Ascending aorta (tissue), 2 donors: ENCODE measurements at regions of chr19 and their contacts with region 1.

Region 1: DNA sequence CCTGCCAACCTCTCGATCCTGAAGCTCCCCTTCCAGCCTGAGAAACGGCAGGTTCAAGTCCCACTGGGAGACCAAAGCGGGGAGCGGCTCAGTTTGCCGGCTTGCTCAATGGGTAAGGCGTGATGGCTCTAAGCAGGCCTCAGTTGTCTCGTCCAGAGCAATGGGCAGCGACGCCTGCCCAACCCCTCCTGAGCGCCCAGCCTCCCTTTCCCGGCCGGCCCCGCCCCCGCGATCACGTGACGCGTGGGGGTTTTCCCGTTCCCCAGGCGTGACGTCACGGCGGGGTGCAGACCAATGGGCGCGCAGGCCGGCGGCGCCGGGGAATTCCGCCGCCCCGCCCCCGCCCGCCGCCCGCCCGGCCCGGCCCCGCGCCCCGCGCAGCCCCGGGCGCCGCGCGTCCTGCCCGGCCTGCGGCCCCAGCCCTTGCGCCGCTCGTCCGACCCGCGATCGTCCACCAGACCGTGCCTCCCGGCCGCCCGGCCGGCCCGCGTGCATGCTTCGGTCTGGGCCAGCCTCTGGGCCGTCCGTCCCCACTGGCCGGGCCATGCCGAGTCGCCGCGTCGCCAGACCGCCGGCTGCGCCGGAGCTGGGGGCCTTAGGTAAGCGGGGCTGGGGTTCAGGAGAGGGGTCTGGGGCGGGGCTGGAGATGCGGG is at the start of gene RELB:
- DNase-seq: peak; percentile 73 to 97
- H3K4me3 ChIP-seq: peak within 1 kb of the TSS; percentile 82 to 100
- H3K27ac ChIP-seq: peak within 1 kb of the TSS; percentile 99 to 100
- H3K4me1 ChIP-seq: peaks cover 0 to 5% of the 10 kb centered on the region in 2 donors
- H3K27me3 ChIP-seq: no peaks in the 10 kb centered on the region
- CTCF ChIP-seq: no peak
- total RNA-seq, gene RELB: 8.7 TPM

Region 2: GRCh38 chr19:44912854-44913253 is 88.4 kb before region 1 on chr19:
- intact Hi-C with region 1: loop called (anchors 5 kb)
- DNase-seq: peak in 1 of 2 donors; percentile 26
- H3K4me3 ChIP-seq: no peak overlapping the region
- H3K27ac ChIP-seq: no peak overlapping the region
- H3K4me1 ChIP-seq: no peaks in the 10 kb centered on the region
- H3K27me3 ChIP-seq: no peaks in the 10 kb centered on the region
- CTCF ChIP-seq: no peak

Region 3: GRCh38 chr19:44972802-44973201 is 28.4 kb before region 1 on chr19:
- intact Hi-C with region 1: no loop called
- DNase-seq: no peak
- H3K4me3 ChIP-seq: no peak overlapping the region
- H3K27ac ChIP-seq: no peak overlapping the region
- H3K4me1 ChIP-seq: no peaks in the 10 kb centered on the region
- H3K27me3 ChIP-seq: no peaks in the 10 kb centered on the region
- CTCF ChIP-seq: no peak

Region 4: DNA sequence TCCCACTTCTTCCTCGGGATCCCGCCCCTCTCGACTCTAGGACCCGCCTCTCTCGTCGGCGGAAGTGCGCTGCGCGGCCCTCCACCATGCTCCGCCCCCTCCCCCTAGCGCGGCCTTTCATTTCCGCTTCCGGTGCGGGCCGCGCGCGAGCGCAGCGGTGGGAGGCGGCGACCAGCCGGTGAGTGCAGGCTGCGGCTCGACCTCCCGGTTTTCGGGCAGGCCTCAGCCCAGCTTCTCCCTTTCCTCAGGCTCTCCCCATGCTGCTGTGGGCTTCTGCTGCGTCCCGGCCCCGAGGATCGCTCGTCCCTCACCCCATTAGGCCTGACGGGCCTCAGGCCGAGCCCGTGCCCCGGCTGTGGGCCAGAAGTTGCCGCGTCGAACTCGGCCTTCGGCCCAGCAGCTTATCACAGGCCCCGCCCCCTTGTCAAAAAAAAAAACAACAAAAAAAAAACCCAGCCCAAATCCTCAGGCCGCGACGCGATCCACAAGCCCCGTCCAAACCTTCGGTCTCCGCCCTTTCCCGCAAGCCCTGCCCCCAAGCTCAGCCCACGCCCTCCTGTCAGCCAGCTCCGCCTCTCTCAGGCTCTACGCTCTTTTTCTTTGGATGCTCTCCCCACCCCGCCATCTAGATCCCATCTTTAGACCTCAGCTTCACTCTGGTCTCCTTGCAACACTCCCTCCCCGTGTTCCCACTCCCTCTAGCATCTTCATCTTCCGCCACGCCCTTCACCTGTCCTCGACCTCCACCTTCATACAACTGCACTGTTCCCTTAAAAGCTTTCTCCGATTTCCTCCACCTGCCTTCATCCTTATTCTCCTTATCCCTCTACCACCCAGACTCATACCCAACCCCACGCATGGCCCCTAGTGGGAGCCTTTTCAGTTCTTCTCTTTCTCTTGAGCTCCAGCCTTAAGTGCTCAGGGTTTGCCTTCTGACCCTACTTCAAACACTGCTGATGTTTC is 38.0 kb after region 1 on chr19 and contains the start of gene CLASRP:
- intact Hi-C with region 1: loop called (anchors 2 kb)
- DNase-seq: peak; percentile 65 to 94
- H3K4me3 ChIP-seq: peak within 1 kb of the TSS; percentile 83 to 86
- H3K27ac ChIP-seq: peak within 1 kb of the TSS; percentile 91 to 96
- H3K4me1 ChIP-seq: peaks cover 5 to 22% of the 10 kb centered on the region in 2 donors
- H3K27me3 ChIP-seq: no peaks in the 10 kb centered on the region
- CTCF ChIP-seq: no peak
- total RNA-seq, gene CLASRP: 103 TPM

Region 5: DNA sequence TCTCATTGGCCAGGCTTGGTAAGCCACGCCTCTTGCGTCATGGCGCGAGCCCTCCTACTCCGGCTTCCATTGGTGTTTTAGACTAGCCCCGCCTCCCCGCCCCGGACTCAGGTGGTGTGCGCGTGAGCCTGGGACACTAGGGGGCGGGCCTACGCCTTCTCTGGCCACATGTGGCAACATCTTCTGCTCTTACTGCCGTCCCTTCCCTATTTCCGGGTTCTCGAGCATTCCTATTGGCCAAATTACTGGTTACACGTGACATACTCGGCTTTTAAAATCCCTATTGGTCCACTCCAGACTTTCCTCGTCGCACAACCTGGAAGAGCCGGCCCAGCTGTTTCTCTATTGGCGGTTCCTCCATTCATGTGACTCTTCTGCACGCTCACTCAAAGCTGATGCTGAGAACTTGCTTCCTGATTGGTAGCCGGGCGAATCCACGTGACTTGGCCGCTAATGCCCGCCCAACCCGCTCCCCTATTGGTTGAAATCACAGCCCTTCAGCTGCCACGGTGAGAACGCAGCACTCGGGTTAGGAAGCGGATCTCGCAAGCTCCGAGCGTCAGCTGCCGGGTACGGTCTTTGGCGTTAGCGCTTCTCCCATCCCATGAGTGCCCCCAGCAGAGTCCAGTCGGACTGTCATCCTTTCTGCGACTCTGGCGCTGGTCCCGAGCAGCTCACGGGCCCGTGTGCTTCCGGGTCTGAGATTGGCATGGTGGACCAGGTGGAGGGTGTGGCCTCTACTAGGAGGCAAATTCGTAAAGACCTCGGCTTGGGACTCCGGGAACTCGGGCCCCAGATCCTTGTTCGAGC is 177.3 kb after region 1 on chr19 and contains the start of gene BLOC1S3:
- intact Hi-C with region 1: loop called (anchors 2 kb)
- DNase-seq: peak; percentile 100
- H3K4me3 ChIP-seq: peak within 1 kb of the TSS; percentile 84 to 91
- H3K27ac ChIP-seq: peak within 1 kb of the TSS; percentile 96 to 99
- H3K4me1 ChIP-seq: peaks cover 3 to 24% of the 10 kb centered on the region in 2 donors
- H3K27me3 ChIP-seq: no peaks in the 10 kb centered on the region
- CTCF ChIP-seq: peak in 2 of 3 experiments; percentile 11 to 34
- total RNA-seq, gene BLOC1S3: 0.32 TPM

Region 6: DNA sequence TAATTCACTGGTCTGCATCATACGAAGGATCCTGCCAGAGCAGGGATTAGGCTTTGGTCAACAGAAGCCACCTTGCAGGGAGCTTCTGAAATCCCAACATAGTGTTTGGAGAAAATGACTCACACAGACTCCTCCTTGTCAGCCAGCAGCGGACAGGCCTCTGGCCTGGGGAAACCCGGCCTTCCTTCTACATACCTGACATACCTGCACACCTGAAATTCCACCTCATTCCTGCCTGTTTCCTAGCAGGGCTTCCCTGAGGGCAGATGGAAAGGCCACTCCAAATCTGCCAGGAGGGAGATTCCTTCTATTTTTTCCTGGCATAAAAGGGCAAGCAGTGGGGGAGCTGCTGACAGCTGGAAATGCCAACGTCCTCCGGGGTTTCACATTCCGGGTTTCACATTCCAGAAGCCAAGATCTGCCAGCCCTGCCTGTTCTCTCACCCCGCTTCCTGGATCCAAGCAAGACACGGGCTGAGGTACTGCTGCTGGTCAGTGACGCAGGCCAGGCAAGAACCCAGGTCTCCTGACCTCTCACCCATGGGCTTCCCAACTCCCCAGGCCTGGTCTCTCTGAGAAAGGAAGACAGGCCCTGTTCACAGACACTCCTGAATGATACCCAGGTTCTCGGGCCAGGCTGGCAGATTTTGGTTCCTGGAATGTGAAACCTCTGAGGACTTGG is 1210.1 kb after region 1 on chr19:
- intact Hi-C with region 1: no loop called
- DNase-seq: no peak
- H3K4me3 ChIP-seq: no peak overlapping the region
- H3K27ac ChIP-seq: no peak overlapping the region
- H3K4me1 ChIP-seq: peaks cover 0 to 11% of the 10 kb centered on the region in 2 donors
- H3K27me3 ChIP-seq: no peaks in the 10 kb centered on the region
- CTCF ChIP-seq: no peak